ENCODE measurements at regions of chr18 and their contacts with region 1.

Region 1: DNA sequence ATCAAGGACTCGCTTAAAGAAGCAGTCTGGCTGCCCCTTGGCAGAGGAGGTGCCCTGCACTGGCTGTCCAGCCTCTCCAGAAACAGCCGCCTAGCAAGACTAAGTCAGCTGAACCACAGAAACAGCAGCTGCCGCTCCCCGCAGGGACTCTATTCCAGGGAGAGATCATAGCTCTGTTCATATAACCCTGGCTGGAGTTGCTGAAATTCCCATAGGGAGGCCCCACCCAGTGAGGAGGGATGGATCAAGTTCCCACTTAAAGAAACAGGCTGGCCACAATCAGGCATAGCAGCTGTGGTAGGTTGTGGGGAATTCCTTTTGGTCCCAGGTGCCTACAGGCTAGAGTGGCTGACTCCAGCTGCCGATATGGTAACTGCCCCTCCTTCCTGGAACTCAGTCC is 74.2 kb upstream of the MC4R start:
- DNase-seq: no peak
- ATAC-seq: no peak
- H3K4me3 ChIP-seq: no peak overlapping the region
- H3K27ac ChIP-seq: no peak overlapping the region
- H3K4me1 ChIP-seq: no peaks in the 10 kb centered on the region
- H3K27me3 ChIP-seq: no peaks in the 10 kb centered on the region
- CTCF ChIP-seq: no peak

Region 2: GRCh38 chr18:60038731-60039130 is 408.1 kb before region 1 on chr18:
- intact Hi-C with region 1: loop called in 1 of 10 experiments (anchors 5 kb)
- DNase-seq: no peak
- ATAC-seq: no peak
- H3K4me3 ChIP-seq: no peak overlapping the region
- H3K27ac ChIP-seq: no peak overlapping the region
- H3K4me1 ChIP-seq: no peaks in the 10 kb centered on the region
- H3K27me3 ChIP-seq: peaks cover 0 to 3% (median 0%) of the 10 kb centered on the region in 7 donors
- CTCF ChIP-seq: no peak

Region 3: DNA sequence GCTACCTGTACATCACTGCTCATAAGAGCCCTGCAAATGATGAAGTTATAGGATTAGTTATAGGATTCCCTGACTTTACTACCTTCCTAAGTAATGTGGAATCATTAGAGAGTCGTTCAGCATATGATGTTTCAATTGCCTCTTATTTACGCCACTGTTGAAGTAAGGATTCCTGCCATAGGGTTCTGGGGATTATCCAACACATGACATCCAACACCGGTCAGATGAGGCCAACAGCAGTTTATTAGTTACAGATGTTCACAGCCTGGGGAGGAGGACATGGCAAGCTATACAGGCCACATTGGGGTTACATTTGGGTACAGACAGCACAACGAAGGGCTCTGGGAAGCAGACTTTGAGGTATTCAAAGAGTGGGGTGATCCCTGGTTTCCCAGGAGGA is 59.9 kb after region 1 on chr18:
- intact Hi-C with region 1: loop called in 1 of 10 experiments (anchors 10 kb)
- DNase-seq: no peak
- ATAC-seq: no peak
- H3K4me3 ChIP-seq: no peak overlapping the region
- H3K27ac ChIP-seq: no peak overlapping the region
- H3K4me1 ChIP-seq: no peaks in the 10 kb centered on the region
- H3K27me3 ChIP-seq: no peaks in the 10 kb centered on the region
- CTCF ChIP-seq: no peak

Region 4: DNA sequence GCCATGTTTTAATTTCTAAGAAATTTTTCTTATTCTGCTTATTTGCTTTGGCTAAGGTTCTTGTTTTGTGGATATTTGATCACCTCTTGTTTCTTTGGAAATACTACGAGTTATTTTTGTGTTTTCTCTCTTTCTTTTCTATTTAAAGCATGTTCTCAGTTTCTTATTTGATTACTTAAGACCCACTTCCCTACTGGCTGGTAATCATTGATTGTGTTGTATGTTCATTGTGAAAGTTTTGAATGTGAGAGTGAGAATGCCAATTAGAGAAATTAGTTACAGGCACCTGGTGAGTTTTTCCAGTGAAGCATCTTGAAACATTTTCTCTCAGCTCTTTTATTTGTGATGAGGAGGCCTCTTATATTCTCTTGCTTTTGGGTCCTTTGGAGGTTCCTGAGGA is 152.4 kb after region 1 on chr18:
- intact Hi-C with region 1: no loop called
- DNase-seq: no peak
- ATAC-seq: no peak
- H3K4me3 ChIP-seq: no peak overlapping the region
- H3K27ac ChIP-seq: no peak overlapping the region
- H3K4me1 ChIP-seq: no peaks in the 10 kb centered on the region
- H3K27me3 ChIP-seq: no peaks in the 10 kb centered on the region
- CTCF ChIP-seq: no peak

Measured in heart right ventricle (tissue), 16 donors.